ENCODE measurements at regions of chrX and their contacts with region 1.

Region 1: DNA sequence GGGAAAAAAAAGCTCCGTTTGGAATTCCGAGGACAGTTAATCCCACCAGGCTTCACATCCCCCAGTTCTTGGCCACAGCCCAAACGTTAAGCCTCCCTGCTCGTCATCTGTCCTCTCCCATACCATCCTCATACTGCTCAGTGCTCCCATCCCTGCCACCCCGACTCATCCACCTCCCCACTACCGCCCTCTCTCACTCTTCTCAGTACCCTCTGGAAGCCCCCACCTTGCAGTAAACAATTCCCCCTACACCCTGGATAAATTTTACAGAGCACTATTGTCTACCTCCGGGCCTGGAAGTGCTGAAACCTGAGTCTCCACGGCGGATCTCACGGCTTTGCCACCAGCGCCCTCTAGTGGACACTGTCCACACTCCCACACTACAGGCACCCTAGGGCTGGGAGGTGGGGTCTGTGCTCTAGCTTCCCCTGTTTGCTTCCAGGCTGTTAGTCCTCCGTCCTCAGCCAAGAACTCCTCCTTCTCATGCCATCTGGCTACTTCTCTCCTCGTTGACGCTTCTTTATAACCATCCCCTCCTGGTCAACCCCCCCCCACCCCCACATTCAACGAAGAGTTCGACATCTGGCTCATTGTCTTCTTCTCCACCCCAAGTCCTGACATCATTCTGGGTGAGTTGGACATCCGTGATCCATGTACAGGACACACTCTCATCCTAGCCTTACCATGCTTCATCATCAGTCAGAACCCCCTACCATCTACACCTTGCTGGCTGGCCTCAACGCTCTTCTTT is 54.5 kb downstream of the RTL9 start:
- DNase-seq: peak; percentile 7 to 45
- ATAC-seq: peak; percentile 90 to 92
- H3K4me3 ChIP-seq: peak overlapping the region in 1 of 4 donors; percentile 4
- H3K27ac ChIP-seq: no peak overlapping the region
- H3K4me1 ChIP-seq: no peaks in the 10 kb centered on the region
- H3K27me3 ChIP-seq: no peaks in the 10 kb centered on the region
- CTCF ChIP-seq: peak; percentile 46 to 86 (median 80)
- POLR2A ChIP-seq: no peak

Region 2: GRCh38 chrX:109911046-109911445 is 502.1 kb before region 1 on chrX:
- in situ Hi-C with region 1: loop called (anchors 25 kb)
- intact Hi-C with region 1: no loop called
- DNase-seq: no peak
- ATAC-seq: no peak
- H3K4me3 ChIP-seq: no peak overlapping the region
- H3K27ac ChIP-seq: no peak overlapping the region
- H3K4me1 ChIP-seq: no peaks in the 10 kb centered on the region
- H3K27me3 ChIP-seq: no peaks in the 10 kb centered on the region
- CTCF ChIP-seq: peak; percentile 27 to 54 (median 30)
- POLR2A ChIP-seq: no peak

Region 3: DNA sequence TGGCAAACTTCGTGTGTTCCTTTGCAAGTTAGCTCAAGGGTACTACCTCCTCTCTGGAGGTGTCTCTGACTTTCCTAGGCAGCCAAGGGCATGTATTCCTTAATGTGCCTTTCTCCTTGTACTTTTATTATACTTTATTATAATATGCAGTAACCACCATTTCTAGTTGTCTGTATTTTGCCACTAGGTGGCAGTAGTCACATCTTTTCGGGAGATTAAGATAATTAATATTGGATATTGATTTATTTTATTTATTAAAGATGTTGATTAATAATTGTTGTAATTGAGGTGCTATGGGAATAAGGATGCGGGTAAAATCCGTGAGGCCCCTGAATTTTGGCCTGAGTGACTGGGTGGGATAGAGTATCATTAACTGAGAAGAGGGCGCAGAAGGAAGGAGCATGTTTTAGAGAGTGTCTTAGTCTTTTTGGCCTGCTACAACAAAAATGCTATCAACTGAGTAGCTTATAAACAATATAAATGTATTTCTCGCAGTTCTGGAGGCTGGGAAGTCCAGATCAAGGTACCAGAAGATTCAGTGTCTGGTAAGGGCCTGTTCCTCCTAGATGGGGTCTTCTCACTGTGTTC is 256.9 kb before region 1 on chrX:
- in situ Hi-C with region 1: loop called (anchors 5 to 10 kb)
- intact Hi-C with region 1: loop called (anchors 1 kb)
- DNase-seq: no peak
- ATAC-seq: no peak
- H3K4me3 ChIP-seq: no peak overlapping the region
- H3K27ac ChIP-seq: no peak overlapping the region
- H3K4me1 ChIP-seq: peaks cover 8 to 16% of the 10 kb centered on the region in 2 donors
- H3K27me3 ChIP-seq: no peaks in the 10 kb centered on the region
- CTCF ChIP-seq: peak in 2 of 5 experiments; percentile 27 to 66
- POLR2A ChIP-seq: no peak

Region 4: GRCh38 chrX:110491846-110492620 is 78.9 kb after region 1 on chrX:
- in situ Hi-C with region 1: no loop called
- intact Hi-C with region 1: no loop called
- DNase-seq: no peak
- ATAC-seq: no peak
- H3K4me3 ChIP-seq: no peak overlapping the region
- H3K27ac ChIP-seq: no peak overlapping the region
- H3K4me1 ChIP-seq: no peaks in the 10 kb centered on the region
- H3K27me3 ChIP-seq: no peaks in the 10 kb centered on the region
- CTCF ChIP-seq: no peak
- POLR2A ChIP-seq: no peak

Measured in gastrocnemius medialis (tissue), 4 donors.